Vagina (tissue), 2 donors: ENCODE measurements at regions of chr1 and their contacts with region 1.

Region 1: DNA sequence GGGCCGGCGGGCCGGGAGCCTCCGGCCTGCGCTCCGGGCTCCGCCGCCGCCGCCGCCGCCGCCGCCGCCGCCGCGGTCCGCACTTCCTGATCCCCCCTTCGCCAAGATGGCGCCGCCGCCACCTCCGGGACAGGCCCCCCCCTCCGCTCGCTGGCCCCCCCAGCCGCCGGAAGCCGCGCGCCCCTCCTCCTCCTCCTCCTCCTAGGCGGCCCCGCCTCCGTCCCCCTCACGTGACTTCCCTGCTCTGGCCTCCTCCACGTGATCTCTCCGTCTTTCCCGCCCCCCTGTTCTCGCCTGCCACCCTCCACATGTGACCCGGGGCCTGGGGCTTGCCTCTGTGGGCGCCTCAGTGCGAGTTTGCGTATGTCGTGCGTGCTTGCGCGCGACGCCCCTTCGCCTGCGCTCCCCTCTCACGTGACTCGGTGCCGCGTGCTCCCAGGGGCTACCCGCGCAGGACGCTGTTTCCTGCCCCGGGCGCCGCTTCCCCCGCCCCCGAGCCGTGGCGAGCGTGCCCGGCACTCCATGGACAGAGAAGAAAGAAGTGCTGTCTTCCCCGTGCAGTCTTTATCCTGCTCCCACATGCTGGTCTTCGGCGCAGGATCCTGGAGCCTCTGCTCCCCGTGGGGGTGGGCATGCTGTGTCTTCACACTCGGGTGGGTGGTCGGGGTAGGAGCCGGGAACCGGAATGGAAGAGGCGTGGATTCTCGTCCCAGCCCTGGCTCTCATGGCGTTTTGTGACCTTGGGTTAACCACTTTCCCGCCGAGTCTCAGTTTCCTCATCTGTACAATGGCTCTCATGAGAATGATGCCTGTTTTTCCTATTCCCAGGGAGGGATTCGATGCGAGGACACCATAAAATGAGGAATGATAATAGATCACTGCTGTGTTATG is at the start of gene UBE2Q1:
- DNase-seq: peak in 1 of 2 donors; percentile 99
- H3K4me3 ChIP-seq: peak within 1 kb of the TSS; percentile 78 to 85
- H3K27ac ChIP-seq: peak within 1 kb of the TSS; percentile 90
- H3K4me1 ChIP-seq: peaks cover 32% of the 10 kb centered on the region
- H3K27me3 ChIP-seq: no peaks in the 10 kb centered on the region
- CTCF ChIP-seq: no peak
- POLR2A ChIP-seq: peak in 1 of 2 donors; percentile 22
- total RNA-seq, gene UBE2Q1: 17.9 TPM

Region 2: GRCh38 chr1:154404984-154405761 is 153.6 kb before region 1 on chr1 and contains the start of gene IL6R:
- intact Hi-C with region 1: loop called (anchors 10 kb)
- DNase-seq: peak in 1 of 2 donors; percentile 97
- H3K4me3 ChIP-seq: peak within 1 kb of the TSS; percentile 55 to 79
- H3K27ac ChIP-seq: peak within 1 kb of the TSS; percentile 95
- H3K4me1 ChIP-seq: peaks cover 45% of the 10 kb centered on the region
- H3K27me3 ChIP-seq: no peaks in the 10 kb centered on the region
- CTCF ChIP-seq: peak in 2 of 3 experiments; percentile 17 to 63
- POLR2A ChIP-seq: peak in 1 of 2 donors; percentile 85
- total RNA-seq, gene IL6R: 50.8 TPM

Region 3: GRCh38 chr1:154479764-154480421 is 78.9 kb before region 1 on chr1:
- intact Hi-C with region 1: loop called (anchors 2 kb)
- DNase-seq: no peak
- H3K4me3 ChIP-seq: no peak overlapping the region
- H3K27ac ChIP-seq: no peak overlapping the region
- H3K4me1 ChIP-seq: no peaks in the 10 kb centered on the region
- H3K27me3 ChIP-seq: no peaks in the 10 kb centered on the region
- CTCF ChIP-seq: peak; percentile 65 to 95 (median 86)
- POLR2A ChIP-seq: no peak

Region 4: GRCh38 chr1:154520333-154520732 is 38.5 kb before region 1 on chr1:
- intact Hi-C with region 1: no loop called
- DNase-seq: no peak
- H3K4me3 ChIP-seq: no peak overlapping the region
- H3K27ac ChIP-seq: no peak overlapping the region
- H3K4me1 ChIP-seq: peaks cover 10% of the 10 kb centered on the region
- H3K27me3 ChIP-seq: no peaks in the 10 kb centered on the region
- CTCF ChIP-seq: no peak
- POLR2A ChIP-seq: no peak

Region 5: DNA sequence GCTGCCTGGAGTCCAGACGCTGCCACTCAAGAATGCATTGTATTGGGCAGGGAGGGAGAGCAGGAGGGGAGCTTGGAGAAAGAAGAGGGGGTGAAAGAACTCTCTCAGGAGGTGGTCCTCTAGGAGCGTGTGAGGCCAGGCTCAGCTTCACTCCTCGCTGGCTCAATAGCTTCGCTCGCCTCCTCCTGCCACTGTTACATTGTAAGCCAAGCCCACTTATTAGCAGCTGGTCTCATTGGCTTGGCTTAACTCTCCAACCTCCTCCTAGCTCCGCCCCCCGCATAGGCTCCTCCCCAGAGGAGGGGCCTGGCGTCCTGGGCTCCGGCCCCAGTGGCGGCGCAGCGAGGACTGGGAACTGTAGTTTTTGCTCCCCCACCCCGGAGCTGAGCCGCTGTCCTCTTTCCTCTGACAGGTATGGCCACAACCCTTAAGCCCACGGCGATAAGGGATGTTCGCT is 311.3 kb after region 1 on chr1 and contains the start of gene KCNN3:
- intact Hi-C with region 1: loop called (anchors 5 kb)
- DNase-seq: peak in 1 of 2 donors; percentile 94
- H3K4me3 ChIP-seq: peak within 1 kb of the TSS; percentile 41
- H3K27ac ChIP-seq: peak within 1 kb of the TSS; percentile 50
- H3K4me1 ChIP-seq: peaks cover 34% of the 10 kb centered on the region
- H3K27me3 ChIP-seq: no peaks in the 10 kb centered on the region
- CTCF ChIP-seq: no peak
- POLR2A ChIP-seq: peak in 1 of 2 donors; percentile 27
- total RNA-seq, gene KCNN3: 7.4 TPM